PC-3 (cell line): ENCODE measurements at regions of chr3 and their contacts with region 1.

Region 1: DNA sequence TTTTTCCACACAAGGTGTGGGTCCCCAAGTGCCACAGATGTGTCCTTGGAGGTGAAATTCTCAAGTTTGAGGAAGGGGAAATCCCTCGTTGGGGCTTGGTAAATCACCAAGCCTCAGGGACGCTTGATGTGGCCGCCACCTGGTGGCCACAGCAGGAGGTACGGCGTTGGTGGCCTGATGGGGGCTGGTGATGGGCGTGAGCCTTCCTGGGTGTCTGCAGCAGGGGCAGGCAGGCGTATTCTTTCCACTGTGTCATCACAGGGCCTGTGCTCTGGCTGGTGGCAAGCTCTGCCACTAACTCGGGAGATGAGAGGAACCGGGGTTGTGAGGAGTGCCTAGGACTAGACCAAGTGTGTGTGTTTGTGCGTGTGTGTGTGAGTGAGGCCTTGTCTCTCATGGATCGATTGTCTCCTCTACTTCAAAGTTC is 4.2 kb downstream of the ACOX2 start:
- DNase-seq: peak; percentile 90
- ATAC-seq: peak; percentile 87
- H3K4me3 ChIP-seq: no peak overlapping the region
- H3K27ac ChIP-seq: no peak overlapping the region
- H3K4me1 ChIP-seq: peaks cover 12% of the 10 kb centered on the region; the same call in 1 of the 2 replicates
- H3K27me3 ChIP-seq: no peaks in the 10 kb centered on the region
- CTCF ChIP-seq: peak; percentile 97

Region 2: GRCh38 chr3:58332575-58333188 is 200.1 kb before region 1 on chr3 and contains the start of gene PXK:
- CTCF ChIA-PET with region 1: no interaction called
- POLR2A ChIA-PET with region 1: no interaction called
- intact Hi-C with region 1: loop called (anchors 2 kb)
- DNase-seq: peak; percentile 74
- ATAC-seq: peak; percentile 78
- H3K4me3 ChIP-seq: peak within 1 kb of the TSS; percentile 95
- H3K27ac ChIP-seq: peak within 1 kb of the TSS; percentile 91
- H3K4me1 ChIP-seq: peaks cover 36% of the 10 kb centered on the region
- H3K27me3 ChIP-seq: no peaks in the 10 kb centered on the region
- CTCF ChIP-seq: peak; percentile 26; the same call in 1 of the 2 replicates
- total RNA-seq, gene PXK: 11.1 and 14.5 TPM in 2 replicates

Region 3: GRCh38 chr3:58463181-58463941 is 69.4 kb before region 1 on chr3:
- CTCF ChIA-PET with region 1: no interaction called
- POLR2A ChIA-PET with region 1: no interaction called
- intact Hi-C with region 1: loop called (anchors 1 kb)
- DNase-seq: peak; percentile 90
- ATAC-seq: peak; percentile 99
- H3K4me3 ChIP-seq: peak overlapping the region; percentile 32
- H3K27ac ChIP-seq: no peak overlapping the region
- H3K4me1 ChIP-seq: peaks cover 14% of the 10 kb centered on the region
- H3K27me3 ChIP-seq: no peaks in the 10 kb centered on the region
- CTCF ChIP-seq: peak; percentile 98

Region 4: DNA sequence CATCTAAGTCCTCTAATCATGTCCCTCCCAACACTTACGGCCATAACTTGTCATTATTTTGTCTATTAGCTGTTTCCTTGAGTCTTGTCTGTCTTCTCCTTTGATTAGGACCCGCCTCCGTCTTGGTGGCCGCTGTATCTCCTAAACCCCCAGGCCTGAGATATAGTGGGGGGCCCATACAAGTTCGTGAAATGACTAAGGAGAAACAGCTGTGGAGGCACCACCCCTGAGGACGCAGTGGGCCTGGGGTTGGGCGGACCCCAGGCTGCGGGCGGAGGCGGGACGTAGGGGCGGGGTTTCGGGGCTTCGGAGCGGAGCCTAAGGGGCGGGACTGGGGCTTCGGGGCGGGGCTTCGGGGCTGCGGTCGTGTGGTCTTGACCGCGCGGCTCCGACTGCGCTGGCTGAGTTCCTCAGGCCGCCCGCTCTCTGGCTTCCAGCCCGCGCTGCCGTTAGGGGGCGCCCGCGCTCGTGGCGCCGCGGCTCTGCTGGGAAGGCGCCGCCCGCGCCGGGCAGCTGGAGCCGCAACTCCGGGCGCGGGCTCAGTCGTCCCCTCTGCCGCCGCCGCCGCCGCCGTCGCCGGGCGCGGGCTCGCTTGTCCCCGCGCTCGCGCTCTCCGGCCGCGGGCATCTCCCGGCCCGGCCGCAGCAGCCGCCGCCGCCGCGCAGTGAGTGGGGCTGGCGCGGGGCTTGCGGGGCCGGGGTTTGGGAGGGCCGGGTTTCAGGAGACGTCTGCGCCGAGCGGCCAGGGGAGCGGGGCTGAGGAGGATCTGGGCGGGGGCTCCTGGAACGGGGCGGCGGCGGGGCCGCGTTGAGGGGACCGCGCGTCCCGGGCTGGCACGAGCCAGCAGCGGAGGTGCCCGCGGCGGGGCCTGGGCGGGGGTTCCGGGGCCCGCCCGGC is 41.1 kb before region 1 on chr3 and contains the start of gene KCTD6:
- CTCF ChIA-PET with region 1: no interaction called
- POLR2A ChIA-PET with region 1: no interaction called
- intact Hi-C with region 1: loop called (anchors 1 kb)
- DNase-seq: peak; percentile 97
- ATAC-seq: peak; percentile 83
- H3K4me3 ChIP-seq: peak within 1 kb of the TSS; percentile 91
- H3K27ac ChIP-seq: no peak within 1 kb of the TSS
- H3K4me1 ChIP-seq: peaks cover 40% of the 10 kb centered on the region
- H3K27me3 ChIP-seq: no peaks in the 10 kb centered on the region
- CTCF ChIP-seq: peak; percentile 55
- total RNA-seq, gene KCTD6: 13.1 and 13.6 TPM in 2 replicates

Region 5: DNA sequence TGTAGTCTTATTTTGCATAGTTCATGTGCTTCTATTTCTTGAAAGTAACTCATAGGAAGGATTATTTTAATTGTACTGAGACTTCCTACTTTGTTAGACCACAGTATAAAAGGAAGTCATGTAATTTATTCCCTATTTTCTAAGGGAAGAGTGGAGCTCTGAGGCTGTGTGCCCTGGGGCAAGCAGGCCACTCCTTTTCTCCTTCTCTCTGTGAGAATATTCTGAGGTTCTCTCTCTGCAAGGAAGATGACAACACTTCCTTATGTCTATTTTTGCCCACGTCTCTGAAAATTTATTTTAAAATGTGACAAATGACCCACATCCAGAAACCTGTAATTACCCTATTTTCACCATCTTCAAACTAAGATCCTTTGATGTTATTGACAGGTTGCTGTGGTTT is 29.9 kb before region 1 on chr3:
- CTCF ChIA-PET with region 1: no interaction called
- POLR2A ChIA-PET with region 1: no interaction called
- intact Hi-C with region 1: no loop called
- DNase-seq: no peak
- ATAC-seq: peak; percentile 51; the same call in 1 of the 2 replicates
- H3K4me3 ChIP-seq: no peak overlapping the region
- H3K27ac ChIP-seq: no peak overlapping the region
- H3K4me1 ChIP-seq: peaks cover 8% of the 10 kb centered on the region; the same call in 1 of the 2 replicates
- H3K27me3 ChIP-seq: no peaks in the 10 kb centered on the region
- CTCF ChIP-seq: no peak

Region 6: GRCh38 chr3:58608648-58609047 is 75.8 kb after region 1 on chr3:
- CTCF ChIA-PET with region 1: no interaction called
- POLR2A ChIA-PET with region 1: no interaction called
- intact Hi-C with region 1: no loop called
- DNase-seq: peak; percentile 96
- ATAC-seq: peak; percentile 85
- H3K4me3 ChIP-seq: peak overlapping the region; percentile 27; the same call in 1 of the 2 replicates
- H3K27ac ChIP-seq: peak overlapping the region; percentile 98
- H3K4me1 ChIP-seq: peaks cover 34% of the 10 kb centered on the region
- H3K27me3 ChIP-seq: no peaks in the 10 kb centered on the region
- CTCF ChIP-seq: no peak